Dendritic cell treated with granulocyte-macrophage colony-stimulating factor and Interleukin-4, amounts not matched to agents 40 ng/mL and 50 ng/mL, for 4 days (primary cell): ENCODE measurements at regions of chr3 and their contacts with region 1.

Region 1: GRCh38 chr3:116139607-116140006 is 305.7 kb downstream of the LSAMP start:
- H3K4me3 Mint-ChIP-seq: no peak overlapping the region
- H3K27ac Mint-ChIP-seq: no peak overlapping the region
- H3K4me1 Mint-ChIP-seq: no peaks in the 10 kb centered on the region
- H3K27me3 Mint-ChIP-seq: no peaks in the 10 kb centered on the region

Region 2: GRCh38 chr3:116067326-116067725 is 72.3 kb before region 1 on chr3:
- intact Hi-C with region 1: no loop called
- H3K4me3 Mint-ChIP-seq: no peak overlapping the region
- H3K27ac Mint-ChIP-seq: no peak overlapping the region
- H3K4me1 Mint-ChIP-seq: no peaks in the 10 kb centered on the region
- H3K27me3 Mint-ChIP-seq: no peaks in the 10 kb centered on the region

Region 3: DNA sequence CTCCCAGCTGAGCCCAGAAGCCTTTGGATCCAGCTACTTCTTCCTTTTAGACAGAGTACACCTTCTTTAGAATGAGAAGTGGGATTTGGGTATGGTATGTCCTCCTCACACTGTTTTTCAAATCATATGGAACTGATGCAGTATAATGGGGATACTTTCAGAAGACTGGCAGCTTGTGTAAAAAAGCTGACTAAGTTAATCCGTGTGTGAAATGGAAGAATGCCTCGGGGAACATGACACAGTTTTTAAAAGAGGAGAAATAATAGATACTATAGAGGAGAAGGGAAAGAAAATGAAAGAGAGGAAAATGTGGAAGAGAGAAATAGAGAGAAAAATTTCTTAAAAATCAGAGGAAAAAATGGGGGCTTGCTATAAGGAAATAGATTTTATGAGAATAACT is 617.7 kb after region 1 on chr3:
- intact Hi-C with region 1: loop called (anchors 2 kb)
- H3K4me3 Mint-ChIP-seq: no peak overlapping the region
- H3K27ac Mint-ChIP-seq: no peak overlapping the region
- H3K4me1 Mint-ChIP-seq: no peaks in the 10 kb centered on the region
- H3K27me3 Mint-ChIP-seq: peaks cover 1% of the 10 kb centered on the region